OCI-LY7 (cell line): ENCODE measurements at regions of chr2 and their contacts with region 1.

Region 1: DNA sequence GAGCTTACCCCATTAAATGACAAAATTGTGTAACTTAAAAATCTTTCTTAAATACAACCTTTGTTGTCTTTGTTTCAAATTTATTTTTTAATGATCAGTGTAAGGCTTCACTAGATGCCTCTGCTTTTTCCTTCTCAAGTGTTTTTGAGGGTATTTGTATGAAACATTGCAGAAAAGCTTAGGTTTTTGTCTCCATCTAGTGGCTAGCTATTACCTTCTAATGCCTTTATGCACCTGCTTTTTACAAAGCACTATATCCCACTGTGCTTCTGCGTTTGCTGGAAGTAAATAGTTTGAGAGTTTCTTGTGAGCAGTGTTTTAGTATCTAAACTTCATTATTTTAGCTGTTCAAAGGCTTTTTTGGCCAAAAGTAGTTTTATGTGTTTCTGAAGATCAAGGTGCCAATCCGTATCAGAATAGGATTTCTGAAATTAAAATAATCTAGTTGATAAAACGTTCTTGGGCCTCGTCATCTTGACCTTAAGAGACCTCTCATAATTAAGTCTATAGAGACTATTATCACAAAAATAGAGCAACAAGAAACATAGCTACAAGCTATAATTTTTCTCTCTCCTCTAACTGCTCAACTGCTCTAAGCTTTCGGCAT is 47.0 kb downstream of the IWS1 start:
- DNase-seq: peak; percentile 71
- H3K4me3 ChIP-seq: no peak overlapping the region
- H3K27ac ChIP-seq: no peak overlapping the region
- H3K4me1 ChIP-seq: no peaks in the 10 kb centered on the region
- CTCF ChIP-seq: peak; percentile 95

Region 2: GRCh38 chr2:127197475-127198385 is 281.6 kb before region 1 on chr2:
- CTCF ChIA-PET with region 1: interaction called, 3 read pairs
- POLR2A ChIA-PET with region 1: no interaction called
- intact Hi-C with region 1: loop called (anchors 1 kb)
- DNase-seq: peak; percentile 56
- H3K4me3 ChIP-seq: no peak overlapping the region
- H3K27ac ChIP-seq: no peak overlapping the region
- H3K4me1 ChIP-seq: no peaks in the 10 kb centered on the region
- CTCF ChIP-seq: peak; percentile 73

Region 3: DNA sequence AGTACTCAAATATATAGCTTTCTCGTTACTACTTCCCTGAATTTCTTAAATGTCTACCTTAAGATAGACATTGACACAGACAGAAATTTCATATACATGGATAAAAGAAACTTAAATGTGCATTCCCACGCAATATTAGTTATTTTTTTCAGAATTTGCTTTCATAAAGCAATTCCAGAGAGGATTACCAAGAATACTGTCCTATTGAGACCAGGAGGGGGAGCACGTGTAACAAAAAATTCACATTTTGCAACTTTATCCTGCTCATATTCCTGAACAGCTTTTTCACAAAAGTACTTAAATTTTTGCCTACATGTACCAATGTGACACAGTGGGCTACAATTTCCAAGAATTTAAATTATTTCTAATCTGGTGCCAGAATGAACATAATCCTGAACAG is 154.7 kb before region 1 on chr2:
- CTCF ChIA-PET with region 1: no interaction called
- POLR2A ChIA-PET with region 1: interaction called, 8 read pairs
- intact Hi-C with region 1: loop called (anchors 2 kb)
- DNase-seq: peak; percentile 55
- H3K4me3 ChIP-seq: no peak overlapping the region
- H3K27ac ChIP-seq: no peak overlapping the region
- H3K4me1 ChIP-seq: no peaks in the 10 kb centered on the region
- CTCF ChIP-seq: peak; percentile 95